ENCODE measurements at regions of chr6 and their contacts with region 1.

Region 1: DNA sequence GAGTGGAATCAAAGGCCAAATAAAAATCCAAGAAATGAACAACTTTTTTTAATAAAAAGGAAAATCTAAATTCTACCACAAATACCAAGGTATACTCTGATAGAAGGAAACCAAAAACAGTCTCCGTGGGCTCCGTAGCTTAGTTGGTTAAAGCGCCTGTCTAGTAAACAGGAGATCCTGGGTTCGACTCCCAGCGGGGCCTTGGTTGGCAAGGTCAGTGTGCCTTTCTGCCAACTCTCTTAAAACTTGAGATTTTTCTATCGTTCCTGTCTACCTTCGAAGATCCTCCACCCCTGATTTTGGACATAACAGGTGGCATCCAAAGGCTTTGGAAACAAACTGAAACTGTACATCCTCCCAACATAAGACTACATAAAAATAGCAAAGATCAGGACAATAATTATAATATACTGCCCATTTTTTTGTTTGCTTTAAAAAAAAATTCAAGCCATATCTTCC is 197.9 kb downstream of the TRIM27 start:
- DNase-seq: no peak
- H3K4me3 ChIP-seq: no peak overlapping the region
- H3K4me3 Mint-ChIP-seq: no peak overlapping the region
- H3K27ac ChIP-seq: no peak overlapping the region
- H3K27ac Mint-ChIP-seq: no peak overlapping the region
- H3K4me1 ChIP-seq: peaks cover 10% of the 10 kb centered on the region
- H3K4me1 Mint-ChIP-seq: peaks cover 9 to 22% (median 15%) of the 10 kb centered on the region in 4 donors
- H3K27me3 ChIP-seq: peaks cover 4% of the 10 kb centered on the region
- H3K27me3 Mint-ChIP-seq: peaks cover 51 to 68% of the 10 kb centered on the region in 2 donors

Region 2: DNA sequence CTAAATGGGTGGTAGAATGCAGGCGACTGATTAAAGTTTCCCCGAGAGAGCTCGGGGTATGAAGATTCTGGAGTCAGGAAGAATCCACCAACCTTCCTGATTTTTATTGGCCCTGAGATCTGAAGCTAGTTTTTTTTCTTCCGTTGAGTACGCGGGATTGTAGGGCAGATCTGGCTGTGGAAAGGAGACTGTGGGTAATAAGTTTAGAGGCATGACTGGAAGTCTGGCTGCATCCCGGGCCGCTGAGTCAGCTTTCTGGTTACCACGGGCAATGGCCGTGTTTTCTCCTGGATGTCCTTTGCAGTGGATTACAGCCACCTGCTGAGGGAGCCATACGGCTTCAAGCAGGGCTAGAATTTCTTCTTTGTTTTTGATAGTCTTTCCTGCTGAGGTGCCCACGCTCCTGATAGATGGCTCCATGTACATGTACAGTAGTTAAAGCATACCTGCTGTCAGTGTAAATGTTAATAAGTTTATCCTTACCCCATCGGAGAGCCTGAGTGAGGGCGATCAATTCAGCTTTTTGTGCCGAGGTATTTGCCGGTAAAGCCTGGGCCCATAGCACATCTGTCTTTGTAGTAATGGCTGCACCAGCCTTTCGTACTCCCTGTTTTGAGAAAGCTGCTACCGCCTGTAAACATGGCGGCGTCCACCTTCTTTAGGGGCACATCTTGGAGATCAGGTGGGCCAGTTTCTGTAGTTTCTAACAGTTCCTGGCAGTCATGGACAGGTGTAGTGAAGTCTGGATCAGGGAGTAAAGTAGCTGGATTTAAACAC is 43.9 kb after region 1 on chr6:
- CTCF ChIA-PET with region 1: no interaction called
- POLR2A ChIA-PET with region 1: no interaction called
- intact Hi-C with region 1: loop called (anchors 10 kb)
- DNase-seq: no peak
- H3K4me3 ChIP-seq: no peak overlapping the region
- H3K4me3 Mint-ChIP-seq: no peak overlapping the region
- H3K27ac ChIP-seq: no peak overlapping the region
- H3K27ac Mint-ChIP-seq: peak overlapping the region in 1 of 7 donors; percentile 54
- H3K4me1 ChIP-seq: no peaks in the 10 kb centered on the region
- H3K4me1 Mint-ChIP-seq: peaks cover 0 to 10% (median 7%) of the 10 kb centered on the region in 4 donors
- H3K27me3 ChIP-seq: peaks cover 59% of the 10 kb centered on the region
- H3K27me3 Mint-ChIP-seq: peaks cover 83 to 88% of the 10 kb centered on the region in 2 donors

Region 3: DNA sequence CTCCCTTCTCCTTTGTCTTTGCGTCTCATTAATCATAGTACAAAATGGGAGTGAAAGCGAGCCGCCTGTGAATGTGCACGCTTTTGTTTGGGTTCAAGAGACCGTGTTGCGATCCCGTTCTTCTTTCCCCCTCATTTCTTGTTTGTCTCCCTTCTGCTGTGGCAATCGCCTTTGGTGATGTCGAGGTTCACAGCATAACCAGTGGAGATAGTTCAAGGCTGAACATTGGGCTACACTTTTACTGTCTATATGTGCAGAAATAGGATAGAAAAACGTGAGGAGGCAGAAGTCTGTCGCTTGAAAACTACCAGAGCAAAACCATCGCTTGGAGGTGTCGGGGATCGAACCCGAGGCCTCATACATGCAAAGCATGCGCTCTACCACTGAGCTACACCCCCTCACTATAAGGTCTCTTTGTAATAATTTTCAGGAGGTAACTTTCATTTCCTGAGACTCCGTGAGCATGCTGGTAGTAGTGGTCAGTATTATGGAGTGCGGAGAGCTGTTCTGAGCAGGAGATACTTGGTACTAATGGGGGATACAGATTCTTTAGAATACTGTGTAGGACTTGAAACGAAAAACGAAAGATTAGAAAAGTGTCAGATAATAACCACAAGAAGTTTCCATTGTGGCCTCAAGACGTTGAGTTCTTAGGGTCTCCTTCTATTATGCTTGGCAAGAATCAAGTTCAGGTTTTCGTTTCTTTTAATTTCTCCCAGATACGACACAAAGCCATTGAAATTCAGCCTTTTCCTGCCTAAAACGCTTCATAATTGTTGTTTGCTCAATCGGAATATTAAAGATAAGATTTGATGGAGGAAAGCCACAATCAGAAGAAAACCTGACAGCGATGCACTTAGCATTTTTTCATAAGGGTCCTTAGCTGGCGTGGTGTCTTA is 91.2 kb after region 1 on chr6:
- CTCF ChIA-PET with region 1: no interaction called
- POLR2A ChIA-PET with region 1: no interaction called
- intact Hi-C with region 1: loop called (anchors 10 kb)
- DNase-seq: no peak
- H3K4me3 ChIP-seq: no peak overlapping the region
- H3K4me3 Mint-ChIP-seq: peak overlapping the region in 1 of 8 donors; percentile 45
- H3K27ac ChIP-seq: no peak overlapping the region
- H3K27ac Mint-ChIP-seq: peak overlapping the region in 1 of 7 donors; percentile 38
- H3K4me1 ChIP-seq: no peaks in the 10 kb centered on the region
- H3K4me1 Mint-ChIP-seq: peaks cover 4 to 18% (median 7%) of the 10 kb centered on the region in 4 donors
- H3K27me3 ChIP-seq: peaks cover 44% of the 10 kb centered on the region
- H3K27me3 Mint-ChIP-seq: peaks cover 69 to 71% of the 10 kb centered on the region in 2 donors

Region 4: DNA sequence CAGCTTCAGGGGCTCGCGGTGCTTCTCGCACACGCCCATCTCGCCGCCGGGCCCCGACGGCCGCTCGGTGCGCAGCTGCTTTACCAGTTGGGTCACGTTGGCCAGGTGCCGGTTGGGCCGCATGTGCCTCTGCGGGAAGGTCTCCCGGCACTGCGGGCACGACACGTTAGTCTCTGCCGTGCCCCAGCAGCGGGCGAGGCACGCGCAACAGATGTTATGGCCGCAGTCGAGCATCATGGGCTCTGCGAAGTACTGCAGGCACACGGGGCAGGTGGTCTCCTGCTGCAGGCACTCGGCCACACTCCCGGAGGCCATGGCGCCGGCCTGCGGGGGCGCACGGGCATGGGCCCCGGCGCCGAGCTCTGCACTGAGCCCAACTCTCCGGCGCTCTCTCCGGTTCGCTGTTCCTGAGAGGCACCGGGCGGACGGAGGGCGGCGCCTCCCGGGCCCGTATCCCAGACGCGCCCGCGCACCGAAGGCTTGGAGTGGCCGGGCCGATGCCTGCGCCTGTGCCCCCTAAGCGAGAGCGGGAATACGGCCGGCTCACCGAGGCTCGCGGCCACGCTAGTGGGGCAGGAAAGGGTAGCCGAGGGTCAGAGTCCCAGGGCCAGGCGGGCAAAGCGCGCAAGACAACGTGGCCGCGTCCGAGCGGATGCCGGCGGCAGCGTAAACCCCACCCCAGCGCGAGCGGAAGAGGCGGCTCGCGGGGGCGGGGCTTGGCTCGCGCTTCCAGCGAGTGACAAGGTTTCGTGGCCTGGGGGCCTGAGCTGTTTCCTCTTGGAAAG is 197.6 kb after region 1 on chr6 and contains the start of gene TRIM27:
- CTCF ChIA-PET with region 1: no interaction called
- POLR2A ChIA-PET with region 1: no interaction called
- intact Hi-C with region 1: no loop called
- DNase-seq: peak; percentile 76 to 84 (median 78)
- H3K4me3 ChIP-seq: peak within 1 kb of the TSS; percentile 82 to 91
- H3K4me3 Mint-ChIP-seq: peak within 1 kb of the TSS; percentile 92 to 98 (median 95)
- H3K27ac ChIP-seq: peak within 1 kb of the TSS; percentile 82
- H3K27ac Mint-ChIP-seq: peak within 1 kb of the TSS; percentile 86 to 96 (median 94)
- H3K4me1 ChIP-seq: peaks cover 46% of the 10 kb centered on the region
- H3K4me1 Mint-ChIP-seq: peaks cover 30 to 49% (median 41%) of the 10 kb centered on the region in 4 donors
- H3K27me3 ChIP-seq: no peaks in the 10 kb centered on the region
- H3K27me3 Mint-ChIP-seq: peaks cover 0 to 2% of the 10 kb centered on the region in 2 donors
- total RNA-seq, gene TRIM27: 102 to 108 TPM

Measured in CD4-positive, alpha-beta memory T cell (primary cell).